ENCODE measurements at regions of chr12 and their contacts with region 1.

Region 1: DNA sequence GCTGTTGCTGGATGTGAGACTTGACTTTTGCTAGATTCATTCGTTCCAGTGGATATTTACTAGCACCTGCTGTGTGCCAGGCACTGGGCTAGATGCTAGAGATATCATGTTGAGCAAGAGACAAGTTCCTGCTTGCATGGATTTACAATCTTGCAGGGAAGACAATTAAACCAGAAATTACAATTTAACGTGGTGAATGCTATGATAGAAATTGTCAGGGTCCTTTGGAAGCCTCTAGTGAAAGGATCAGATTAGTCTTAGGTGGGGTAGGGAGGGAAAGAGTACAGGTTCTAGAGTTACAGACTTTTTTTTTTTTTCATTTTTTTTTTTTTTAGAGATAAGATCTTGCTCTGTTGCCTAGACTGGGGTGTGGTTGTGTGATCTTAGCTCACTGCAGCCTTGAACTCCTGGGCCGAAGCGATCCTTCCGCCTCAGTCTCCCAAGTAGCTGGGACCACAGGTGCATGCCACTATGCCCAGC is 36.7 kb downstream of the SPATS2 start:
- DNase-seq: no peak
- H3K4me3 ChIP-seq: no peak overlapping the region
- H3K27ac ChIP-seq: no peak overlapping the region
- H3K4me1 ChIP-seq: no peaks in the 10 kb centered on the region
- H3K27me3 ChIP-seq: no peaks in the 10 kb centered on the region
- CTCF ChIP-seq: no peak
- EP300 ChIP-seq: no peak
- POLR2A ChIP-seq: no peak
- RAD21 ChIP-seq: no peak

Region 2: GRCh38 chr12:49388682-49389386 is 15.2 kb before region 1 on chr12:
- CTCF ChIA-PET with region 1: interaction called, 15 read pairs
- POLR2A ChIA-PET with region 1: no interaction called
- DNase-seq: peak; percentile 58 to 90
- H3K4me3 ChIP-seq: peak overlapping the region in 1 of 4 experiments; percentile 32; a peak in 1 of 8 replicates
- H3K27ac ChIP-seq: no peak overlapping the region
- H3K4me1 ChIP-seq: peaks cover 0 to 4% (median 2%) of the 10 kb centered on the region in 4 experiments; a peak in 3 of 7 replicates
- H3K27me3 ChIP-seq: peaks cover 0 to 2% (median 0%) of the 10 kb centered on the region in 4 experiments; a peak in 1 of 7 replicates
- CTCF ChIP-seq: peak; percentile 87 to 91 (median 87)
- EP300 ChIP-seq: 0 out of 3 replicates have a peak, but pooled peaks of 1 of the 2 experiments have one; percentile 58
- POLR2A ChIP-seq: no peak
- RAD21 ChIP-seq: peak; percentile 41 to 54; a peak in 3 of 4 replicates